ENCODE measurements at regions of chr3 and their contacts with region 1.

Region 1: GRCh38 chr3:187745201-187746058 is at the start of gene BCL6:
- DNase-seq: peak; percentile 97
- H3K4me3 ChIP-seq: peak within 1 kb of the TSS; percentile 89
- H3K27ac ChIP-seq: peak within 1 kb of the TSS; percentile 99
- H3K27me3 ChIP-seq: peaks cover 3% of the 10 kb centered on the region
- CTCF ChIP-seq: no peak
- polyA plus RNA-seq, gene BCL6: 12.8 and 19.2 TPM in 2 replicates

Region 2: GRCh38 chr3:187628169-187628568 is 117.3 kb before region 1 on chr3:
- CTCF ChIA-PET with region 1: no interaction called
- POLR2A ChIA-PET with region 1: no interaction called
- DNase-seq: no peak
- H3K4me3 ChIP-seq: no peak overlapping the region
- H3K27ac ChIP-seq: no peak overlapping the region
- H3K27me3 ChIP-seq: peaks cover 4% of the 10 kb centered on the region
- CTCF ChIP-seq: no peak

Region 3: GRCh38 chr3:187788984-187789857 is 43.8 kb after region 1 on chr3:
- CTCF ChIA-PET with region 1: no interaction called
- POLR2A ChIA-PET with region 1: no interaction called
- DNase-seq: no peak
- H3K4me3 ChIP-seq: no peak overlapping the region
- H3K27ac ChIP-seq: no peak overlapping the region
- H3K27me3 ChIP-seq: peaks cover 6% of the 10 kb centered on the region
- CTCF ChIP-seq: no peak

Region 4: DNA sequence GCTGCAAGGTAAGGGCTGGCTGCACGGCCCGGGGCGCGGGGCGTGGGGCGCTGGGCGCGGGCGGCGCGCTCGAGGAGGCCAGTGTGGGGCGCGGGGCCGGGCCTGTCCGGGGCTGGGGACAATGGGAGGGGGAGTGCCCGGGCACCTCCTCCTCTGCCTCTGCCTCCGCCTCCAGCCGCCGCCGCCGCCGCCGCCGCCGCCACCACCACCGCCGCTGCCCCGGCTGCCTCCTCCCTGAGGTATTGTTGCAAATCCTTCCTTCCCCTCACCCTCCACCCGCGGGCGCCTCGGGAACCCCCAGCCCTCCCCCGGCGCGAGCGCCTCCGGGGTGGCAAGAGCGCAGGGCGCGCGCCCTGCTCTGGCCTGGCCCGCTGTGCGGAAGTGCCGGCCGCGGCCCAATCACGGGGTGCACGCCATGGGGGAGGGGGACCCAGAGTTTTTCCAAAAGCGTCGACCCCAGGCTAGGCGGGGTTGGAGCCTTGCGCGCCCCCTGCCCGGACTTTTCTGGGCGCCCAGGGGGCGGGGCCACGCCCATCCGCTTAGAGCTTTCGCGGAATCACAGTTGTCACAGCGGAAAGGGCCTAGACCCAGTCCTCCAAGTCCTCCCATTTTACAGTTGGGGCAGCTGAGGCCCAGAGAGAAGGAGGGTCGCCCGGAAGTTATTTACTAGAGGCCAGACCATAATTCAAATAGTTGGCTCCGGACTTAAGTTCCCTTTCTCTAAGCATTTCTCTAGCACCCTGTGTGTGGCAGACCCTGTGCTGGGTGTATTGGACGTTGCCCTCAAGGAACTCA is 408.8 kb after region 1 on chr3 and contains the start of gene LPP:
- CTCF ChIA-PET with region 1: interaction called, 30 read pairs
- POLR2A ChIA-PET with region 1: interaction called, 14 read pairs
- DNase-seq: peak; percentile 39
- H3K4me3 ChIP-seq: peak within 1 kb of the TSS; percentile 64
- H3K27ac ChIP-seq: peak within 1 kb of the TSS; percentile 99
- H3K27me3 ChIP-seq: no peaks in the 10 kb centered on the region
- CTCF ChIP-seq: 0 out of 2 replicates have a peak, but pooled peaks have one; percentile 1
- polyA plus RNA-seq, gene LPP: 64.2 and 76.3 TPM in 2 replicates

Region 5: GRCh38 chr3:188270423-188270972 is 525.1 kb after region 1 on chr3:
- CTCF ChIA-PET with region 1: interaction called, 51 read pairs
- POLR2A ChIA-PET with region 1: interaction called, 11 read pairs
- DNase-seq: peak; percentile 95
- H3K4me3 ChIP-seq: no peak overlapping the region
- H3K27ac ChIP-seq: peak overlapping the region; percentile 86
- H3K27me3 ChIP-seq: no peaks in the 10 kb centered on the region
- CTCF ChIP-seq: no peak